ENCODE measurements at regions of chr5 and their contacts with region 1.

Region 1: DNA sequence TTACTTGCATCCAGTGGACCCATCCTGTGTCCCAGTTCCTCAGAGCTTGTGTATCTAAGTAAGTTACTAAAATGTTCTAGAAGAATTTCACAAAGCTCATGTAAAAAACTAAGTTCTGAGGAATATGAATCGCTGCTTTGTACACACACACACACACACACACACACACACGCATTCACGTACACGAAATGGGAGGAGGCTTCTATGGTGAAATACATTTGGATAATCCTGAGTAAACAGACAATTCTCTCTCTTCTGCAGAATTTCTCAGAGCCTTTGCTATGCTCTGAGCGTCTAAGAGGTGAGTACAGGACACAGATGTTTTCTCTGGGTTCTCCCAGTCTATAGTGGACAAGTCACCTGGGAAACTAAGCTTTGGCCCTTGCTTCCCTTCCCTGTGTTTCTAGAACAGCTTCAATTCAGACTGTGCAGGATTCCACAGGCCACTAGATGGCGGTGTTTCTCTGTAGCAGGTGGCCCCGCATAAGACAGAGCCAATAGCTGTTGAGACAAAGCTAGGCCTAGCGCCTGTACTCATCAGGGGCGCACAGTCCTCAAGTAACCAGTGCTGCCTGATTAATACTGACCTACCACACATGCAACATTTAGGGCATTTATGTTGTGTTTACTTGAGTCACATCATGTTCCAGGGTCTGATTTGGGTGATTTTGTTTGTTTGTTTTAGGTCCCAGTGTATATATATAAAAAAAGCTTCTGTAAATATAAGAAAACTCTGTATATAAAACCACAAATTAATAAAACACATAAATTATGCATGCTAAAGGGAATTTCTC is 114.8 kb downstream of the LIFR start:
- DNase-seq: peak; percentile 89
- H3K4me3 ChIP-seq: no peak overlapping the region
- H3K27ac ChIP-seq: no peak overlapping the region
- H3K4me1 ChIP-seq: no peaks in the 10 kb centered on the region
- H3K27me3 ChIP-seq: no peaks in the 10 kb centered on the region
- CTCF ChIP-seq: peak; percentile 89 to 96
- POLR2A ChIP-seq: no peak

Region 2: GRCh38 chr5:38029482-38030001 is 412.1 kb before region 1 on chr5:
- CTCF ChIA-PET with region 1: no interaction called
- POLR2A ChIA-PET with region 1: no interaction called
- dilution Hi-C with region 1: no loop called
- intact Hi-C with region 1: no loop called
- DNase-seq: no peak
- H3K4me3 ChIP-seq: no peak overlapping the region
- H3K27ac ChIP-seq: no peak overlapping the region
- H3K4me1 ChIP-seq: no peaks in the 10 kb centered on the region
- H3K27me3 ChIP-seq: peaks cover 0 to 3% of the 10 kb centered on the region in 2 experiments
- CTCF ChIP-seq: no peak
- POLR2A ChIP-seq: no peak

Region 3: DNA sequence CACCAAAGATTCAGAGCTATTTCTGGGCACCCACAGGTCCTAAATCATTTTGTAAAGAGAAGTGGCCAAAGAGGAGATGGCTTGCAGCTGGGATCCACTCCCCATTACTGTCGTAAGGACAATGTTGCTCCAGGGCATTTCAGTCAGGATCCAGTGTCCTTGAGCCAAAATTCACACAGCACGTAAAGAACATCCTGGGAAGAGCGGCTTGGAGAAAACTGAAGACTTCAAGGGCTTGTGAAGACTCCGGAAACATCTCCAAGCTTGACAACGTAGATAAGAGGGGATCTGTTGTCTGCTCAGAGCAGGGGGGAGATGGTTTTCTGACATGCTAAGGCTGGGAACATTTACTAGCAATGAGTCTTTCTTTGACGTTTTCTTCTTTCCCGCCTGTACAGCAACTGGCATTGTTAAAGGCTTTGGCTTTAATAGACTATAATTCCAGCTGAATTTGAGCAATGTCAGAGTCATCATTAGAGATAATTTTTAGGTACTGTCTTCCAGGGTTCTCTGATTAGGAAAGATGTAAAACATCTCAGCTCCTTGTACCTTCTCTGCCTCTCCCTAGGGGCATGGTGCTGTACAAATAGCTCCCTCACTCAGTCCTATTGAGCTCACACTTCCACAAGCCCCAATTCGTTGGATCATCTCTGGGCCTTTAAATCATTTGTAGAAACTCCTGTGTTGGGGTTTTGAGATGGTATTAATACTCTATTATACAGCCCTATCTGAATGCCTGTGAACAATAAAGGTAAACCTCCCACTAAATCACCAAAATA is 143.6 kb before region 1 on chr5:
- CTCF ChIA-PET with region 1: no interaction called
- POLR2A ChIA-PET with region 1: no interaction called
- dilution Hi-C with region 1: no loop called
- intact Hi-C with region 1: no loop called
- DNase-seq: no peak
- H3K4me3 ChIP-seq: no peak overlapping the region
- H3K27ac ChIP-seq: no peak overlapping the region
- H3K4me1 ChIP-seq: no peaks in the 10 kb centered on the region
- H3K27me3 ChIP-seq: peaks cover 5% of the 10 kb centered on the region in 2 experiments
- CTCF ChIP-seq: no peak
- POLR2A ChIP-seq: no peak

Region 4: GRCh38 chr5:38453506-38453905 is 11.9 kb after region 1 on chr5:
- CTCF ChIA-PET with region 1: interaction called, 55 read pairs
- POLR2A ChIA-PET with region 1: no interaction called
- dilution Hi-C with region 1: no loop called
- intact Hi-C with region 1: no loop called
- DNase-seq: no peak
- H3K4me3 ChIP-seq: no peak overlapping the region
- H3K27ac ChIP-seq: no peak overlapping the region
- H3K4me1 ChIP-seq: no peaks in the 10 kb centered on the region
- H3K27me3 ChIP-seq: no peaks in the 10 kb centered on the region
- CTCF ChIP-seq: no peak
- POLR2A ChIP-seq: no peak

Region 5: GRCh38 chr5:38497946-38498345 is 56.3 kb after region 1 on chr5:
- CTCF ChIA-PET with region 1: interaction called, 22 read pairs
- POLR2A ChIA-PET with region 1: no interaction called
- dilution Hi-C with region 1: no loop called
- intact Hi-C with region 1: no loop called
- DNase-seq: peak; percentile 14
- H3K4me3 ChIP-seq: no peak overlapping the region
- H3K27ac ChIP-seq: no peak overlapping the region
- H3K4me1 ChIP-seq: no peaks in the 10 kb centered on the region
- H3K27me3 ChIP-seq: no peaks in the 10 kb centered on the region
- CTCF ChIP-seq: no peak
- POLR2A ChIP-seq: no peak

Region 6: GRCh38 chr5:38551030-38552017 is 109.7 kb after region 1 on chr5:
- CTCF ChIA-PET with region 1: interaction called, 177 read pairs
- POLR2A ChIA-PET with region 1: no interaction called
- dilution Hi-C with region 1: no loop called
- intact Hi-C with region 1: loop called (anchors 1 kb)
- DNase-seq: peak; percentile 59
- H3K4me3 ChIP-seq: no peak overlapping the region
- H3K27ac ChIP-seq: no peak overlapping the region
- H3K4me1 ChIP-seq: peaks cover 27% of the 10 kb centered on the region
- H3K27me3 ChIP-seq: no peaks in the 10 kb centered on the region
- CTCF ChIP-seq: peak; percentile 57 to 61
- POLR2A ChIP-seq: no peak

Region 7: GRCh38 chr5:38666668-38667498 is 225.2 kb after region 1 on chr5:
- CTCF ChIA-PET with region 1: interaction called, 184 read pairs
- POLR2A ChIA-PET with region 1: no interaction called
- dilution Hi-C with region 1: no loop called
- intact Hi-C with region 1: loop called (anchors 1 kb)
- DNase-seq: peak; percentile 67
- H3K4me3 ChIP-seq: no peak overlapping the region
- H3K27ac ChIP-seq: no peak overlapping the region
- H3K4me1 ChIP-seq: peaks cover 5% of the 10 kb centered on the region
- H3K27me3 ChIP-seq: no peaks in the 10 kb centered on the region
- CTCF ChIP-seq: peak; percentile 65 to 82
- POLR2A ChIP-seq: no peak

Region 8: DNA sequence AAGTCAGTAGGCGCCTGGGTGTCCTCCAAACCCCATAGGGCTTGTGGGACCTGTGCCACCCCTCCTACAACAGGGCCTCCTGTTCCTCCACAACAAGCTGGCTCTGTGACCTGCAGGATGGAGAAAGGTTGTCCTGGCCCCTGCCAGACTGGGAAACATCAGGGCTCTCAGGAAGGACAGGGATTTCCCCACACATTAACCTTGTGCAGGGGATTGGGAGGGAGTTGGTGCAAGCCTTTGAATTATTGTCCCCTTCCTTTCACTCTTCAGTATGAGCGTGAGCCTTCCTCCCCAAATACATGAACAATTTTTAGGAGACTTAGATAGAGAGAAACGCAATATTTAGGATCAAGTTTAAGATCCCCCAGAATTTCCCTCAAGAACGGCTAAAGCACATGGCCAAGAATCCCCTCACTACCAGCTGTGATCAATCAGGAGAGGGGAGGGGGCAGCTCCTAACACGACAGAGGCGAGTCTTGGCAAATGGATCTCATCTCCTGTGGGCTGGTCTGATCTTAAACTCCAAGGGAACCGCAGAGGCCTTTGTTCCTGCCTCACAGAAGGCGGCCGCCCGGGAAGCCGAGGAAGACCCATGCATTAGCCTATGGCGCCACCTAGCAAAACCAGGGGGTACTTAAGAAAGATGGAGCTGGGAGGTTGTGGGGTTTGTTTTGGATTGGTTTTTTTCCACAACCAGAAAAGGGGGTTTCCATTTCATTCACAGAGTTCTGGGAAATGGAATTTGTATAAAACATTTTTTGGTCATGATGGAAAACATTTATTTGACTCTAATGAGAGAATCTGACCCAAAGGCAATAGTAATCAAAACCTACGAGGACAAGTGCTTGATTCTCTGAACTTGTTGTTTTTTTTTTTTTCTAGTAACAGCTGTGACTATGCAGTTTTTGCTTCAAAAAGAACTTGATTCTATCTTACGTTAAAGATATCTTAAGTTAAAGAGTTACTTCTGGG is 368.0 kb after region 1 on chr5:
- CTCF ChIA-PET with region 1: interaction called, 501 read pairs
- POLR2A ChIA-PET with region 1: no interaction called
- dilution Hi-C with region 1: loop called (anchors 25 kb)
- intact Hi-C with region 1: loop called (anchors 1 kb)
- DNase-seq: peak; percentile 87
- H3K4me3 ChIP-seq: no peak overlapping the region
- H3K27ac ChIP-seq: no peak overlapping the region
- H3K4me1 ChIP-seq: peaks cover 31% of the 10 kb centered on the region
- H3K27me3 ChIP-seq: no peaks in the 10 kb centered on the region
- CTCF ChIP-seq: peak; percentile 81 to 83
- POLR2A ChIP-seq: no peak

Region 9: DNA sequence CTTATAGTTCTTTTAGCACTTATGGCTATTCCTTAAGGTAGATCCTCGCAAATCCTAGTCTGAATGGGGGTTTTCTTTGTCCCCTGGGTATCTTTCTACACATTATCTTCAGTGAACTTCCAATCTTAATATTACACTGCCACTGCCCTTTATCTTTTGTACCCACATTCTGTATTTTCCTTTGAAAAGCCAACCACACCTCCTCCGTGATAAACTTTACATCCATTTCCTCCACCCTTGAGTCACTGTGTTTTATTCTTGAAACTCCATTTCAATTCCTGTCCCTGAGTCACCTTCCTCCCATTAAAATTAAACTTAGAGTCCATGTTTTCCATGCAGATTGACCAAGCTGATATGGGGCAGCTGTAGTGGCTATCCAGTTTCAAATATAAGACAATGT is 675.8 kb after region 1 on chr5:
- CTCF ChIA-PET with region 1: no interaction called
- POLR2A ChIA-PET with region 1: no interaction called
- dilution Hi-C with region 1: no loop called
- intact Hi-C with region 1: no loop called
- DNase-seq: peak; percentile 97
- H3K4me3 ChIP-seq: no peak overlapping the region
- H3K27ac ChIP-seq: peak overlapping the region; percentile 64
- H3K4me1 ChIP-seq: peaks cover 54% of the 10 kb centered on the region
- H3K27me3 ChIP-seq: no peaks in the 10 kb centered on the region
- CTCF ChIP-seq: no peak
- POLR2A ChIP-seq: no peak

Measured in endothelial cell of umbilical vein (primary cell).